CD4-positive, alpha-beta memory T cell (primary cell): ENCODE measurements at regions of chr15 and their contacts with region 1.

Region 1: GRCh38 chr15:59688841-59689625 is at the start of gene BNIP2:
- DNase-seq: peak; percentile 99 to 100 (median 99)
- H3K4me3 ChIP-seq: peak within 1 kb of the TSS; percentile 94 to 100
- H3K4me3 Mint-ChIP-seq: peak within 1 kb of the TSS; percentile 88 to 99 (median 94)
- H3K27ac ChIP-seq: peak within 1 kb of the TSS; percentile 100
- H3K27ac Mint-ChIP-seq: peak within 1 kb of the TSS; percentile 89 to 99 (median 99)
- H3K4me1 ChIP-seq: peaks cover 46% of the 10 kb centered on the region
- H3K4me1 Mint-ChIP-seq: peaks cover 29 to 61% (median 40%) of the 10 kb centered on the region in 4 donors
- H3K27me3 ChIP-seq: no peaks in the 10 kb centered on the region
- H3K27me3 Mint-ChIP-seq: no peaks in the 10 kb centered on the region
- total RNA-seq, gene BNIP2: 86.9 to 87.9 TPM

Region 2: DNA sequence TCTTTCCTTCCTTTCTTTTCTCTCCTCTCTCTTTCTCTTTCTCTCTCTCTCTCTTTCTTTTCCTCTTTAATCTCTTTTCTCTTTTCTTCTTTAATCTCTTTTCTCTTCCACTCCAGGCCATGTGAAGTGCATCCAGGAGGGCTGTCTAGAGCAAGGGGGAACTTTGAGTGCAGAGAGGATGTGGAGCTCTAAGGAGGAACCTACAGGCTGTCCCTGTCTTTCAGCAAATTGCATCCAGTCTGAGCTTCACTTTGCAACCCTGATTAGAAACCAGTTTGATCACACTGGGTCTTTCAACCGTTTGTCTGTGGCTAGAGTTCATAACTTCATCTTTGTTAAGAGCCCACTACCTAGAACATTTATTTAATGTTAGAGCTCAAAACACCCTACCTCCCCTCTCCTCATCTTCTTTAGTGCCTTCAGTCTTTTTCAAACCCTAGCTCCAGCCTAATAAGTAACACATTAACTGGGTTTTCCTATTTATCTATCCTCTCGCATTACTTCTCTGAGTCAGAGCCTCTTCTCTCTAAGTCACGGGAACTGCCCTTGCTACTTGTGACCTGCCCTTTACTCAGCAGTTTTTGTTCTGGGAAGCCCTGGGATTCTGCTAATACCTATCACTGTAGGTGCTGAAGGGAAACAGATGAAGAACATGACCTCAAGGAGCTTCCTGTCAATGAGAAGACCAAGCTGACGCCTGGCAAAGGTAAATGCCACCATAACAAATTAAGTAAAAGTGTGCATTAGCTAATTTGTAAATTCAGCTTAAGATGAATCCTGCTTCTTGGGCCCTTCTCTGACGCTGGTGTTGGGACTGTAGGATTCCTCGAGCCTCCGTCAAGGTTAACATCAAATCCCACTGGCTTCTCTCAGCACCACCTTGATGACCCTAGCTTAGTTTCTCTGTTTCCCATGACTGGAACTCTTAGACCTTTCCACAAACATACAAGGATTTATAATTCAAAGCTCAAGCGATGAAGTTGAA is 77.5 kb before region 1 on chr15 and contains the start of gene GCNT3:
- CTCF ChIA-PET with region 1: no interaction called
- POLR2A ChIA-PET with region 1: no interaction called
- intact Hi-C with region 1: no loop called
- DNase-seq: no peak
- H3K4me3 ChIP-seq: no peak within 1 kb of the TSS
- H3K4me3 Mint-ChIP-seq: no peak within 1 kb of the TSS
- H3K27ac ChIP-seq: no peak within 1 kb of the TSS
- H3K27ac Mint-ChIP-seq: peak within 1 kb of the TSS in 3 of 7 donors; percentile 3 to 66 (median 50)
- H3K4me1 ChIP-seq: peaks cover 3% of the 10 kb centered on the region
- H3K4me1 Mint-ChIP-seq: peaks cover 0 to 4% (median 3%) of the 10 kb centered on the region in 4 donors
- H3K27me3 ChIP-seq: no peaks in the 10 kb centered on the region
- H3K27me3 Mint-ChIP-seq: peaks cover 9 to 18% of the 10 kb centered on the region in 2 donors
- total RNA-seq, gene GCNT3: not detected

Region 3: GRCh38 chr15:59656897-59657634 is 32.0 kb before region 1 on chr15 and contains the start of gene GTF2A2:
- CTCF ChIA-PET with region 1: interaction called, 13 read pairs
- POLR2A ChIA-PET with region 1: interaction called, 62 read pairs
- intact Hi-C with region 1: loop called (anchors 1 kb)
- DNase-seq: peak; percentile 90 to 95 (median 91)
- H3K4me3 ChIP-seq: peak within 1 kb of the TSS; percentile 71 to 76
- H3K4me3 Mint-ChIP-seq: peak within 1 kb of the TSS in 7 of 8 donors; percentile 6 to 62 (median 53)
- H3K27ac ChIP-seq: peak within 1 kb of the TSS; percentile 79
- H3K27ac Mint-ChIP-seq: peak within 1 kb of the TSS in 4 of 7 donors; percentile 28 to 89 (median 51)
- H3K4me1 ChIP-seq: peaks cover 29% of the 10 kb centered on the region
- H3K4me1 Mint-ChIP-seq: peaks cover 10 to 16% (median 13%) of the 10 kb centered on the region in 4 donors
- H3K27me3 ChIP-seq: no peaks in the 10 kb centered on the region
- H3K27me3 Mint-ChIP-seq: no peaks in the 10 kb centered on the region
- total RNA-seq, gene GTF2A2: 58.5 to 64.6 TPM

Region 4: DNA sequence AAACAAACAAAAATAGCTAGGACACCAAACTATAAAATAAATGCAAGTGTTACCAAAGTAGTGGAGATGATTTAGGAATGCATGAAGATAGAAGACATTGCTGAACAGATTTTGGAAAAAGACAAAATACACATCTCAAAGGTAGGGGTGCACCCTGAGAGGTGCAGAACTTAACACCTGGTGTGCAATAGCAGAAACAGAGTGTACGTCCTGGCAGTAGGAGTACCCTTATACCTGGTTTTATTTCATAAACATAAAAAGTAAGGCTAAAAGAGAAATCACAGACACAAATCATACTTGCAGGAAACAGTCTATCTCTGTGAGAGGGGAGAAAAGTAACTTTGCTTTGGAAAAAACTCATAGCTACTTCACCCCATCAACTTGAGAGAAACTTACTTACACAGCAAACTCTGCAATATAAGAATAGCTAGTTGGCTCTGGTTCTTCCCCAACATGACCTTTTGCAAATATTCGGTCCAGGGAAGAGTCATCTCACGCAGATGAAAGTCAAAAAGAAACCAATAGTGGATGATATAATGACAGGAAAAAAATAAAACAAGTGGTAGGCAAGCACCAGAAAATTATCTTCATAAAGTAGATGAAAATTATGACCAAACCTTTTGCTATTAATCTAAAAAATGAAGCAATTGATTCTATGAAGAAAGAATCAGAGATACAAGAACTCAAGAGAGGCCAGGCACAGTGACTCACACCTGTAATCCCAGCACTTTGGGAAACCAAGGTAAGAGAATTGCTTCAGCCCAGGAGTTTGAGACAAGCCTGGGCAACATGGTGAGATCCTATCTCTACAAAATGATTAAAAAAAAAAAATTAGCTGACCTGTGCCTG is 108.9 kb after region 1 on chr15:
- CTCF ChIA-PET with region 1: interaction called, 6 read pairs
- POLR2A ChIA-PET with region 1: no interaction called
- intact Hi-C with region 1: loop called (anchors 5 kb)
- DNase-seq: no peak
- H3K4me3 ChIP-seq: no peak overlapping the region
- H3K4me3 Mint-ChIP-seq: peak overlapping the region; percentile 69 to 93 (median 81)
- H3K27ac ChIP-seq: peak overlapping the region; percentile 38
- H3K27ac Mint-ChIP-seq: peak overlapping the region; percentile 43 to 98 (median 92)
- H3K4me1 ChIP-seq: peaks cover 88% of the 10 kb centered on the region
- H3K4me1 Mint-ChIP-seq: peaks cover 45 to 85% (median 64%) of the 10 kb centered on the region in 4 donors
- H3K27me3 ChIP-seq: no peaks in the 10 kb centered on the region
- H3K27me3 Mint-ChIP-seq: no peaks in the 10 kb centered on the region

Region 5: GRCh38 chr15:59966262-59966661 is 277.2 kb after region 1 on chr15:
- CTCF ChIA-PET with region 1: no interaction called
- POLR2A ChIA-PET with region 1: no interaction called
- intact Hi-C with region 1: no loop called
- DNase-seq: no peak
- H3K4me3 ChIP-seq: no peak overlapping the region
- H3K4me3 Mint-ChIP-seq: no peak overlapping the region
- H3K27ac ChIP-seq: no peak overlapping the region
- H3K27ac Mint-ChIP-seq: no peak overlapping the region
- H3K4me1 ChIP-seq: no peaks in the 10 kb centered on the region
- H3K4me1 Mint-ChIP-seq: no peaks in the 10 kb centered on the region
- H3K27me3 ChIP-seq: no peaks in the 10 kb centered on the region
- H3K27me3 Mint-ChIP-seq: peaks cover 3 to 8% of the 10 kb centered on the region in 2 donors

Region 6: GRCh38 chr15:60179786-60180391 is 490.9 kb after region 1 on chr15:
- CTCF ChIA-PET with region 1: interaction called, 6 read pairs
- POLR2A ChIA-PET with region 1: interaction called, 6 read pairs
- intact Hi-C with region 1: loop called (anchors 1 kb)
- DNase-seq: peak; percentile 35 to 51 (median 45)
- H3K4me3 ChIP-seq: no peak overlapping the region
- H3K4me3 Mint-ChIP-seq: no peak overlapping the region
- H3K27ac ChIP-seq: no peak overlapping the region
- H3K27ac Mint-ChIP-seq: no peak overlapping the region
- H3K4me1 ChIP-seq: no peaks in the 10 kb centered on the region
- H3K4me1 Mint-ChIP-seq: no peaks in the 10 kb centered on the region
- H3K27me3 ChIP-seq: no peaks in the 10 kb centered on the region
- H3K27me3 Mint-ChIP-seq: peaks cover 8 to 18% of the 10 kb centered on the region in 2 donors

Region 7: GRCh38 chr15:60478566-60479360 is 789.7 kb after region 1 on chr15 and contains the start of gene ICE2:
- CTCF ChIA-PET with region 1: interaction called, 3 read pairs
- POLR2A ChIA-PET with region 1: interaction called, 5 read pairs
- intact Hi-C with region 1: loop called (anchors 2 kb)
- DNase-seq: peak; percentile 93 to 97 (median 94)
- H3K4me3 ChIP-seq: peak within 1 kb of the TSS; percentile 72 to 85
- H3K4me3 Mint-ChIP-seq: peak within 1 kb of the TSS; percentile 91 to 100 (median 98)
- H3K27ac ChIP-seq: peak within 1 kb of the TSS; percentile 88
- H3K27ac Mint-ChIP-seq: peak within 1 kb of the TSS; percentile 96 to 100 (median 99)
- H3K4me1 ChIP-seq: peaks cover 38% of the 10 kb centered on the region
- H3K4me1 Mint-ChIP-seq: peaks cover 37 to 55% (median 46%) of the 10 kb centered on the region in 4 donors
- H3K27me3 ChIP-seq: no peaks in the 10 kb centered on the region
- H3K27me3 Mint-ChIP-seq: no peaks in the 10 kb centered on the region
- total RNA-seq, gene ICE2: 63.7 to 68.4 TPM